ENCODE measurements at regions of chr11 and their contacts with region 1.

Region 1: DNA sequence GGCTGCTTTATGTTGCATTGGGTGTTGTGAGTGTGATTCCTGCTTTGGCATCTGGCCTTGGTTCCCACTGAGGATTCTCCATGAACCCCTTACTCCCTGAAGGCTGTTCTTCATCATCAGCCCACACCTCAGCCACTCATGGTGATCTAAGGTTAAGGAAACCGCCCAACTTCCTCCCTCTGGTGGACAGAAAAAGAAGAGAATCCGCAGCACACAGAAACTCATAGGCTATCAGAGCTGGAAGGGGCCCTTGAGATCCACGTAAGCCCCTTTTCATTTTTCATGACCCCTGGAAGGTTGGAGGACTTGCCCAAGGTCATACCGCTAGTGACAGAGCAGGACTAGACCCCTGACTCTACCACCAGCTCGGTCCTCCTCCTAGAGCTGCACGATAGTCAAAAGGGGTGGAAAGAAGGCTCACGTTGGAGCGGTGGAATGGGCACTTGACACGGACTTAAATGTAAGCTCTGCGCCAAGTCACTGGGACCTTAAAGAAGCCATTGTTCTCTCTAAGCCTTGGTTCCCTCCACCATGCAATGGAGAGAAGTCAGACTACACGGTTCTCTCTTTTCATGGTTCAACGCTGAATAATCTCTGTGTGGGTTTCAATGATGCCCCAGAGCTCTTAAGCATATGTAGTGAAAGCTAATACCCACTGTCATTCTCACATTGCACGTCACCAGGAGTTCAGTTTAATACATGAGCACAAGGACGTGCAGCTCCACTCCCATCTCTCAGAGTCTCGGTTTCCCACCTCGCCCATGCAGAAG is 83.6 kb upstream of the CRTAM start:
- DNase-seq: peak; percentile 17 to 73 (median 45)
- ATAC-seq: peak; percentile 46
- H3K4me3 ChIP-seq: no peak overlapping the region
- H3K4me3 Mint-ChIP-seq: peak overlapping the region; percentile 11
- H3K27ac ChIP-seq: no peak overlapping the region
- H3K27ac Mint-ChIP-seq: no peak overlapping the region
- H3K4me1 ChIP-seq: peaks cover 36% of the 10 kb centered on the region
- H3K4me1 Mint-ChIP-seq: peaks cover 62% of the 10 kb centered on the region
- H3K27me3 ChIP-seq: no peaks in the 10 kb centered on the region
- H3K27me3 Mint-ChIP-seq: no peaks in the 10 kb centered on the region
- CTCF ChIP-seq: peak; percentile 61

Region 2: DNA sequence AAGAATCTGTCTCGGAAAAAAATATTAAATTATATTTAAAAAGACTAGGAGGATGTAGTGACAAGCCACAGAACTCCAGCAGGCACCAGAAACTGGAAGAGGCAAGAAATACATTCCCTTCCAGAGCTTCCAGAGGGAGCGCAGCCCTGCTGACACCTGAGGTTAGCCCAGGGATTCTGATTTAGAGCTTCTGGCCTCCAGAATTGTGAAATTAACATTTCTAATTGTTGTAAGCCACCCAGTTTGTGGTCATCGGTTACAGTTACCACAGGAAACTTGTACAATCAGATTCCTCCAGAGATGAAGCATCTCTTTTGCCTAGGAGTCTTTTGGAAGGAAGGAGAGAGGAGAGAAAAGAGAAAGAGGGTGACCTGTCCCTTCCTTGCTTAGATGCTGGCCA is 105.6 kb before region 1 on chr11:
- CTCF ChIA-PET with region 1: interaction called, 517 read pairs
- POLR2A ChIA-PET with region 1: interaction called, 4 read pairs
- intact Hi-C with region 1: no loop called
- DNase-seq: no peak
- ATAC-seq: no peak
- H3K4me3 ChIP-seq: no peak overlapping the region
- H3K4me3 Mint-ChIP-seq: no peak overlapping the region
- H3K27ac ChIP-seq: no peak overlapping the region
- H3K27ac Mint-ChIP-seq: no peak overlapping the region
- H3K4me1 ChIP-seq: no peaks in the 10 kb centered on the region
- H3K4me1 Mint-ChIP-seq: no peaks in the 10 kb centered on the region
- H3K27me3 ChIP-seq: peaks cover 0 to 2% of the 10 kb centered on the region in 2 experiments
- H3K27me3 Mint-ChIP-seq: peaks cover 2% of the 10 kb centered on the region
- CTCF ChIP-seq: no peak

Region 3: DNA sequence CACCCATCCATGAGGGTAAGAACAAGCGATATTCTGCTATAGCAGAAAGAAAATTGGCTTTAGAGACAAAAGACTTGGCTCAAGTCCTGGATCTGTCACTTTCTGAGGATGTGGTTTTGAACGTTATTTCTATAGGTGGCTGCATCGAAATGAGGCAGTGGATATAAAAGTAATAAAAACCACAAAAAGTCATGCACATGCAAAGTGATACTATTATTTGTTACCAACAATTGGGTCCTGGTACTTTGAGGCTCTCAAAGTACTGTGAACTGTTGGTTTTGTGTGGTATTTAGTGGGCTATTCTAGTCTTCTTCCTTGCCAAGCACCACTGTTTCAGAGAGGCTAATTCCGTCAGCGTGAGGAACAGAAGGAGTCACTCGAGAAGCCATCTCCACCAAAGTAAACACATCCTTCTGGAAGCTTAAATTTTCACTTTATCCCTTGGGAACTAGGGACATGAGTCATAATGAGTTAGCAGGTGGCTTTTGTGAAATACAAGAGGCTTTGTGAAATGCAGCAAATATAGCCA is 86.1 kb before region 1 on chr11:
- CTCF ChIA-PET with region 1: interaction called, 80 read pairs
- POLR2A ChIA-PET with region 1: interaction called, 22 read pairs
- intact Hi-C with region 1: no loop called
- DNase-seq: peak in 2 of 9 experiments; percentile 38 to 66
- ATAC-seq: peak; percentile 72
- H3K4me3 ChIP-seq: no peak overlapping the region
- H3K4me3 Mint-ChIP-seq: peak overlapping the region; percentile 42
- H3K27ac ChIP-seq: peak overlapping the region; percentile 4 to 39
- H3K27ac Mint-ChIP-seq: peak overlapping the region; percentile 90
- H3K4me1 ChIP-seq: peaks cover 63% of the 10 kb centered on the region
- H3K4me1 Mint-ChIP-seq: peaks cover 77% of the 10 kb centered on the region
- H3K27me3 ChIP-seq: no peaks in the 10 kb centered on the region
- H3K27me3 Mint-ChIP-seq: no peaks in the 10 kb centered on the region
- CTCF ChIP-seq: no peak

Region 4: GRCh38 chr11:122697636-122698167 is 57.0 kb before region 1 on chr11:
- CTCF ChIA-PET with region 1: interaction called, 69 read pairs
- POLR2A ChIA-PET with region 1: interaction called, 8 read pairs
- intact Hi-C with region 1: loop called in 1 of 2 experiments (anchors 2 kb)
- DNase-seq: peak in 7 of 9 experiments; percentile 14 to 72 (median 60)
- ATAC-seq: peak; percentile 81
- H3K4me3 ChIP-seq: peak overlapping the region; percentile 4 to 25
- H3K4me3 Mint-ChIP-seq: peak overlapping the region; percentile 66
- H3K27ac ChIP-seq: peak overlapping the region; percentile 57 to 64
- H3K27ac Mint-ChIP-seq: peak overlapping the region; percentile 94
- H3K4me1 ChIP-seq: peaks cover 80% of the 10 kb centered on the region
- H3K4me1 Mint-ChIP-seq: peaks cover 91% of the 10 kb centered on the region
- H3K27me3 ChIP-seq: no peaks in the 10 kb centered on the region
- H3K27me3 Mint-ChIP-seq: no peaks in the 10 kb centered on the region
- CTCF ChIP-seq: no peak

Region 5: DNA sequence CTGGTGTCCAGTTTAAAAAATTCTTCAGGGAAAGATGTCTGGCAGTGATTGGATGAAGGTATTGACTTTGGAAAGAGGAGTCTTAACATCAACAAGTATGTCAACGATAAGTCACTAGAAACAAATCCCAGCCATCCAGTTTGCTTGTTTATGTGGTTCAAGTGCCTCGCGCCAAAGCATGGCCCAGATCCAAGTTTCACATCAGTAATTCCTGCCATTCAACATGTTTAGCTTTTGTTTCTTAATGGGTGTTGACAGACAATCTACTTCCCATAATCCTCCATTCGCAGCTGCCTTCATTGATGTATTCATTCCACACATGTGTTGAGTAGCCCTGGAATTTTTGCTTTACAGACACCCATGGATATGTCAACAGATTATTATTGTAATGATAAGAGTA is 21.4 kb before region 1 on chr11:
- CTCF ChIA-PET with region 1: interaction called, 29 read pairs
- POLR2A ChIA-PET with region 1: interaction called, 4 read pairs
- intact Hi-C with region 1: no loop called
- DNase-seq: no peak
- ATAC-seq: no peak
- H3K4me3 ChIP-seq: no peak overlapping the region
- H3K4me3 Mint-ChIP-seq: no peak overlapping the region
- H3K27ac ChIP-seq: no peak overlapping the region
- H3K27ac Mint-ChIP-seq: peak overlapping the region; percentile 69
- H3K4me1 ChIP-seq: peaks cover 53% of the 10 kb centered on the region
- H3K4me1 Mint-ChIP-seq: peaks cover 30% of the 10 kb centered on the region
- H3K27me3 ChIP-seq: no peaks in the 10 kb centered on the region
- H3K27me3 Mint-ChIP-seq: no peaks in the 10 kb centered on the region
- CTCF ChIP-seq: no peak

Region 6: DNA sequence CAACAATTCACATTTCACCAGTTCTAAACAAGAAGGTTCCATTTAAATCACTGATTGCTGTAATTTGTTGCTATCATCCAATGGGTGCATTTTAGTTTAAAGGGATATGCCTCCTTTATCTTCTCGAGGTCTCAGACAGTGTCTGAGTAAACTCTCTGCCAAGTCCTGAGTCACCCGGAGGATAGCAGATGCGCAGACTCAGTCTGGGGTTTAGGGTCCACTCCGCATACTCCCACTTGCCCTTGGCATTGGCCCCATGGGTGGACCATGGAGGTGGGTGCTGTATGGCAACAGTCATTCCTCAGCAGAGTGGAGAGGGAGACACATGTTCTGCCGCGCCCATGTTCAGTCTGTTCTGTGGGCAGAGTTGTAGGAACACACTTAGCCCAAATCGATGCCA is 18.2 kb after region 1 on chr11:
- CTCF ChIA-PET with region 1: interaction called, 41 read pairs
- POLR2A ChIA-PET with region 1: no interaction called
- intact Hi-C with region 1: no loop called
- DNase-seq: no peak
- ATAC-seq: no peak
- H3K4me3 ChIP-seq: no peak overlapping the region
- H3K4me3 Mint-ChIP-seq: no peak overlapping the region
- H3K27ac ChIP-seq: no peak overlapping the region
- H3K27ac Mint-ChIP-seq: no peak overlapping the region
- H3K4me1 ChIP-seq: no peaks in the 10 kb centered on the region
- H3K4me1 Mint-ChIP-seq: peaks cover 30% of the 10 kb centered on the region
- H3K27me3 ChIP-seq: no peaks in the 10 kb centered on the region
- H3K27me3 Mint-ChIP-seq: no peaks in the 10 kb centered on the region
- CTCF ChIP-seq: no peak

Region 7: GRCh38 chr11:122853971-122854446 is 99.3 kb after region 1 on chr11:
- CTCF ChIA-PET with region 1: interaction called, 29 read pairs
- POLR2A ChIA-PET with region 1: no interaction called
- intact Hi-C with region 1: no loop called
- DNase-seq: peak in 5 of 9 experiments; percentile 41 to 85 (median 65)
- ATAC-seq: no peak
- H3K4me3 ChIP-seq: no peak overlapping the region
- H3K4me3 Mint-ChIP-seq: no peak overlapping the region
- H3K27ac ChIP-seq: no peak overlapping the region
- H3K27ac Mint-ChIP-seq: peak overlapping the region; percentile 93
- H3K4me1 ChIP-seq: peaks cover 57% of the 10 kb centered on the region
- H3K4me1 Mint-ChIP-seq: peaks cover 61% of the 10 kb centered on the region
- H3K27me3 ChIP-seq: no peaks in the 10 kb centered on the region
- H3K27me3 Mint-ChIP-seq: no peaks in the 10 kb centered on the region
- CTCF ChIP-seq: peak; percentile 78